Heart left ventricle (tissue), 16 donors: ENCODE measurements at regions of chr6 and their contacts with region 1.

Region 1: DNA sequence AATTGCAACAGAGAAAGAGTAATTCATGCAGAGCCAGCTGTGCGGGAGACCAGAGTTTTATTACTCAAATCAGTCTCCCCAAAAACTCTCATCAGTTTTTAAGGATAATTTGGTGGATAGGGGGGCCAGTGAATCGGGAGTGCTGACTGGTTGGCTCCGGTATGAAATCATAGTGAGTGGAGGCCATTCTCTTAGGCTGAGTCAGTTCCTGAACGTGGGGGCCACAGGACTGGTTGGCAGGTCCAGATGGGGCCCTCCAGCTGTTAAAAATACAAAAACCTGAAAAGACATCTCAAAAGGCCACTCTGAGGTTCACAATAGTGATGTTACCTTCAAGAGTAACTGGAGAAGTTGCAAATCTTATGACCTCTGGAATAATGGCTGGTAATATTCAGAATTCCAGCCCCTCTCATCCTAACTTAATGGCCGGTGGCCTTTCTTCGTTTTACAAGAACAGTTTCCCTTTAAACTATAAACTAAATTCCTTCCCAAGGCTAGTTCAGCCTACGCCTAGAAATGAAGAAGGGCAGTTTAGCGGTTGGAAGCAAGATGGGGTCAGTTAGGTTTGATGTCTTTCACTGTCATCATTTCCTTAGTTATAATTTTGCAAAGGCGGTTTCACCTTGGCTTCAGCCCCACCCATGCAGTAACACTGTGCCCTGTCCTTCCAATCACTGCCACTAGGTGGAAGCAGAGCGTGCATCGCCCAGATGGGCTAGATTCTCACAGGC is 6.8 kb upstream of the MICA start:
- DNase-seq: peak; percentile 70 to 84 (median 82)
- ATAC-seq: peak in 2 of 4 donors; percentile 29 to 62
- H3K4me3 ChIP-seq: no peak overlapping the region
- H3K27ac ChIP-seq: peak overlapping the region in 1 of 12 donors; percentile 4
- H3K4me1 ChIP-seq: peaks cover 0 to 37% (median 22%) of the 10 kb centered on the region in 12 donors
- H3K27me3 ChIP-seq: no peaks in the 10 kb centered on the region
- CTCF ChIP-seq: peak; percentile 76 to 98 (median 90)
- POLR2A ChIP-seq: no peak

Region 2: GRCh38 chr6:31356946-31357466 is 39.6 kb before region 1 on chr6 and contains the start of gene HLA-B:
- intact Hi-C with region 1: no loop called
- DNase-seq: peak; percentile 77 to 97 (median 93)
- ATAC-seq: peak; percentile 93 to 98 (median 98)
- H3K4me3 ChIP-seq: peak within 1 kb of the TSS; percentile 49 to 98 (median 71)
- H3K27ac ChIP-seq: peak within 1 kb of the TSS in 11 of 12 donors; percentile 70 to 100 (median 86)
- H3K4me1 ChIP-seq: peaks cover 0 to 30% (median 2%) of the 10 kb centered on the region in 12 donors
- H3K27me3 ChIP-seq: peaks cover 0 to 15% (median 0%) of the 10 kb centered on the region in 9 donors
- CTCF ChIP-seq: no peak
- POLR2A ChIP-seq: peak in 1 of 2 donors; percentile 92
- total RNA-seq, gene HLA-B: 235 to 2,858 (median 371) TPM

Region 3: DNA sequence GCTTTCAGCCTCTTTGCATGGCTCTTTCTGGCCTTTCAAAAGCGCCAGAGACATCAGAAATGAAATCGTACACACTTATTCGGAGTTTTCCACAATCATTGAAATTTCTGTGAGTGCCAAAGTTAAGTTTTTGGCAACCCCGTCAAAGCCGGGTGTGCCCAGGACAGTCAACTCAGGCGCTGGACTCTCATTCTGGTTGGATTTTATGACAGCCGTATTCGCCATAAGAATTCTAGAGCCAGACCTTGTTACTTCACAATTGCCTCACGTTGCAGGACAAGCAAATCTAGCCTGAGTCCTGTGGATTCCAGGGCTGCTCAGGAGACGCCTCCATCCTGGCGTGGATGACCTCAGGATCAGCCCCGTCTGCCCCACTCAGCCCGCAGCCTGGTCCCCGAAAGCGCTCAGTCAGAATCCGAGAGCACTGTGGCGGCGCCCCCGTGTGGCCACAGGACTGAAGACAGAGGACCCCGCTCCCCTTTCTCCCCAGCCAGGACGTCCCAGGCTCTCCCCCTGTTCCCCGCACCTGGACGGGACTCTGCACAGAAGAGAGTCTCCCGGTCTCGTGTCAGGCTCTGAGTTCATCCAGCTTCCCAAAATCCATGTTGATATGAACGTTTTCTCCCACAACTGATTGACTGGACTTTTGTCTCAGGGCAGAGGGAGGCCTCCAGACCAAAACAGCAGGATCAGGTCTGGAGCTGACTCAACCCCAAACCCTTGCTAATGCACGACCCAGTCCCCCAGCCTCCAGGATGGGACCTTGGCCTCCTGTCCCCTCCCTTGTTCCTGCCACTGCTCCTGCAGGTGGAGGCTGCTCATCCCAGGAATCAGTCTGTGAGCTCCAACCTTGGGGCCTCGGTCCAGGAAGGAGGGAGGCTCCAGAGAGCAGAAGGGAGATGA is 45.0 kb after region 1 on chr6:
- intact Hi-C with region 1: loop called (anchors 1 to 2 kb)
- DNase-seq: peak; percentile 77 to 92 (median 84)
- ATAC-seq: peak; percentile 92 to 97 (median 96)
- H3K4me3 ChIP-seq: peak overlapping the region in 9 of 12 donors; percentile 6 to 43 (median 28)
- H3K27ac ChIP-seq: no peak overlapping the region
- H3K4me1 ChIP-seq: peaks cover 0 to 8% (median 2%) of the 10 kb centered on the region in 12 donors
- H3K27me3 ChIP-seq: peaks cover 0 to 10% (median 0%) of the 10 kb centered on the region in 9 donors
- CTCF ChIP-seq: peak; percentile 73 to 91 (median 84)
- POLR2A ChIP-seq: no peak